Activated T-helper 2 cell treated with anti-CD3 and anti-CD28 coated beads, Interferon-gamma antibody, Interleukin-2, Interleukin-4, amounts not matched to agents 10 μg/mL and 5 μg/mL and 100 μg/mL, durations not matched to agents 14 hours and 24 hours and 36 hours (primary cell): ENCODE measurements at regions of chr18 and their contacts with region 1.

Region 1: GRCh38 chr18:46250084-46250811 is 146.1 kb downstream of the HAUS1 start:
- DNase-seq: peak; percentile 67
- H3K4me3 Mint-ChIP-seq: peak overlapping the region; percentile 14
- H3K27ac Mint-ChIP-seq: peak overlapping the region; percentile 79
- H3K4me1 Mint-ChIP-seq: peaks cover 55% of the 10 kb centered on the region
- H3K27me3 Mint-ChIP-seq: no peaks in the 10 kb centered on the region

Region 2: GRCh38 chr18:45825258-45826044 is 424.8 kb before region 1 on chr18 and contains the start of gene SIGLEC15:
- intact Hi-C with region 1: no loop called
- DNase-seq: no peak
- H3K4me3 Mint-ChIP-seq: no peak within 1 kb of the TSS
- H3K27ac Mint-ChIP-seq: no peak within 1 kb of the TSS
- H3K4me1 Mint-ChIP-seq: peaks cover 10% of the 10 kb centered on the region
- H3K27me3 Mint-ChIP-seq: peaks cover 36% of the 10 kb centered on the region
- total RNA-seq, gene SIGLEC15: not detected in 2 replicates

Region 3: GRCh38 chr18:46013484-46014189 is 236.6 kb before region 1 on chr18:
- intact Hi-C with region 1: loop called (anchors 1 kb)
- DNase-seq: no peak
- H3K4me3 Mint-ChIP-seq: no peak overlapping the region
- H3K27ac Mint-ChIP-seq: peak overlapping the region; percentile 53
- H3K4me1 Mint-ChIP-seq: peaks cover 18% of the 10 kb centered on the region
- H3K27me3 Mint-ChIP-seq: no peaks in the 10 kb centered on the region

Region 4: DNA sequence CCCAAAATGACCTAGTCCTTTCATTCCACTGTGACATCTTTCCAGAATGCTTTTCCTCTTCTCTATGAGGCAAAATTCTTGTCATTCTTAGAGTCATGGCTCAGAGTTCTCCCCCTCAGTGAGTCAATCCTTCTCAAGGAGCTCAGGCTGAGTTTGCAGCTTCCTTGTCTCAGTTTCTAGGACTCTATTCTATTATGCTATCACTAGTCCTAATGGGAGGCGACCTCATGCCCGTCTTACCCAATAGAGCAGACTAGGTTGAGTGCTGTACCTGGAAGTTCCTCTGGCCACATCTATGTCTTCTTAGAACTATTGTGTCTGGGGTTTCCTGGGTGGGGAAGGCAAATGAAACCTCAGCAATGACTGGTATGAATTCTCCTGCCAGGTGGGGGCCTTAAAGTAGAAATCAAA is 94.6 kb before region 1 on chr18:
- intact Hi-C with region 1: loop called (anchors 5 kb)
- DNase-seq: peak; percentile 61
- H3K4me3 Mint-ChIP-seq: peak overlapping the region; percentile 66
- H3K27ac Mint-ChIP-seq: peak overlapping the region; percentile 95
- H3K4me1 Mint-ChIP-seq: peaks cover 51% of the 10 kb centered on the region
- H3K27me3 Mint-ChIP-seq: no peaks in the 10 kb centered on the region

Region 5: DNA sequence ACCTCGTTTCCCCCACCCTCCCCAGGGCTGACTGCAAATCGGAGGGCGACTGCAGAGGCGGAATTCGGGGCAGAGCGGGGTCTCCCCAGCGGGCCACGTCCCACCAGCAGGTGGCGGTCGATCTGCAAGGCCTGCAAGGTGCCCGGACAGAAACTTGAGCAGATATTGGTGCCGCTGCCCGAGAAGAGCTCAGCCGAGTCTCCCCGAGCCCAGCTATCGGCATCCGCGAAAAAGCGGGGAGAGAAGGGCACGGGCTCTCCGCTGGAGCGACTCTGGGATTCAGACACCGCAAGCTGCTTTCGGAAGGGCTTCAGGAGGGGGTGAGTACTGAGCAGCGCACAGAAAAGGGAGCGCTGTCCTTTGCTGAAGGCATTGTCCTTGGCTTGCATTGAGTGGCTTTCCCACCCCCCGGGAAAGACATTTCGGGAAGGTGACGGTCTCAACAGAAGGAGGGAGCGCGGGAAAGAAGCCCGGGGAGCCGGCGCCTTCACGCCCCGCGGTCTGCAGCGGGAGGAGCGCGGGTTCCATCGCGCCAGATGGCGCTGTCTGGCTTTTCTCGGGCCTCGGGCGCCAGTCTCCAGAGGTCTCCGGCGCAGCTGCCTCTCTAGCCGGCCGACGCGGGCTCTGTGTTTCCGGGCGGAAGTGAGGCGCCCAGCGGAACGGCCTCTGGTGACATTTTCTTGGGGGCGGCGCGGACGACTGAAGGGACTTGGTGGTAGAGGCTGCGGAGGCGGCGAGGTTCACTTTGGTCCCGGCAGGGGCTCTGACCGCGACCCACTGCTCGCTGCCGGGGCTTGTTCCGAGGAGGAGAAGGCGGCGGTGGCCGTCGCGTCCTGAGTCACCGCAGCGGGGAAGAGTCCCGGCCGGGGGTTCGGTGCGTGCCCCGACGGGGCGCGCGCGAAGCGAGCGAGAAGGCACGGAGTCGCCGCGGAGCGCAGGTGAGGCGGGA is 76.6 kb before region 1 on chr18:
- intact Hi-C with region 1: loop called (anchors 1 kb)
- DNase-seq: peak; percentile 90
- H3K4me3 Mint-ChIP-seq: peak overlapping the region; percentile 96
- H3K27ac Mint-ChIP-seq: peak overlapping the region; percentile 99
- H3K4me1 Mint-ChIP-seq: peaks cover 47% of the 10 kb centered on the region
- H3K27me3 Mint-ChIP-seq: no peaks in the 10 kb centered on the region

Region 6: GRCh38 chr18:46213295-46213694 is 37.0 kb before region 1 on chr18:
- intact Hi-C with region 1: loop called (anchors 1 kb)
- DNase-seq: no peak
- H3K4me3 Mint-ChIP-seq: no peak overlapping the region
- H3K27ac Mint-ChIP-seq: peak overlapping the region; percentile 46
- H3K4me1 Mint-ChIP-seq: peaks cover 70% of the 10 kb centered on the region
- H3K27me3 Mint-ChIP-seq: no peaks in the 10 kb centered on the region

Region 7: DNA sequence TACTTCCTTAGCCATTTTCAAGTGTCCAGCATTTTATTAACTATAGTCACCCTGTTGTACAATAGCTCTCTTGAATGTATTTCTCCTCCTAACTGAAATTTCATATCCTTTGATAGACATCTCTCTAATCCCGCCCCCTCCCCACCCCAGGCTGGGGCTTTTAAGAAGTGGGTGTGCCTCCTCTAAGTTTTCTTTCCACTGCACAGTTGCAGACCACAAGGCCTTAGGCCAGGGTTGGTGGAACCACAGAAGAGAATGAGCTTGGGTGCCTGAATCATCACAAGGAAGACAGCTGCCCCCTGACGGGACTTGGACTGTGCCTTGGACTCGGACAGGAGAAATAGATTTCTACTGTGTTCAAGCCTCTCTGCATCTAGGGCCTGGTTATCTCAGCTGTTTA is 47.4 kb after region 1 on chr18:
- intact Hi-C with region 1: loop called (anchors 2 kb)
- DNase-seq: peak; percentile 41
- H3K4me3 Mint-ChIP-seq: no peak overlapping the region
- H3K27ac Mint-ChIP-seq: no peak overlapping the region
- H3K4me1 Mint-ChIP-seq: peaks cover 19% of the 10 kb centered on the region
- H3K27me3 Mint-ChIP-seq: peaks cover 14% of the 10 kb centered on the region